Activated CD4-positive, alpha-beta memory T cell treated with anti-CD3 and anti-CD28 coated beads for 36 hours (primary cell): ENCODE measurements at regions of chr7 and their contacts with region 1.

Region 1: GRCh38 chr7:138752568-138753518 is 45.0 kb upstream of the TMEM213 start:
- DNase-seq: peak; percentile 98
- H3K4me3 Mint-ChIP-seq: peak overlapping the region; percentile 34
- H3K27ac Mint-ChIP-seq: peak overlapping the region; percentile 84
- H3K4me1 Mint-ChIP-seq: peaks cover 78% of the 10 kb centered on the region
- H3K27me3 Mint-ChIP-seq: no peaks in the 10 kb centered on the region

Region 2: DNA sequence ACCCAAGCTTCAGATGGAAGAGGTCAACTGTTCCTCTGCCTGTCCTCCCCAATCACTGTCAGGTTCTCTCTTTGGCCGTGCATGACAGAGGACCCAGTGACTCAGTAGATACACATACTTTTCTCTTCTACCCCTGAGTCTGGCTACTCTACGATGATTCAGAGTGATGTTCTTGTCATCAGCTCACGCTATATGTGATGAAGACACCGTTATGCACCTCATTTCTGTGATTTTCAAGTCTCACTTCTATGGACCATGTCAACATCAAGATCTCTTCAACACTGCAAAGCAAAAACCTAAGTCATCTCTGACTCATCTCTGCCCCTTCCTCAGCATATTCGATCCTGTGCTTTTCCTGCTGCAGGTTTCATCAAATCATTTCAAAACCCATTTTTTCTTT is 829.5 kb before region 1 on chr7:
- CTCF ChIA-PET with region 1: no interaction called
- POLR2A ChIA-PET with region 1: no interaction called
- intact Hi-C with region 1: loop called (anchors 5 kb)
- DNase-seq: peak; percentile 36
- H3K4me3 Mint-ChIP-seq: no peak overlapping the region
- H3K27ac Mint-ChIP-seq: peak overlapping the region; percentile 49
- H3K4me1 Mint-ChIP-seq: peaks cover 38% of the 10 kb centered on the region
- H3K27me3 Mint-ChIP-seq: no peaks in the 10 kb centered on the region

Region 3: GRCh38 chr7:138459413-138460175 is 293.2 kb before region 1 on chr7:
- CTCF ChIA-PET with region 1: no interaction called
- POLR2A ChIA-PET with region 1: no interaction called
- intact Hi-C with region 1: loop called (anchors 1 kb)
- DNase-seq: peak; percentile 98
- H3K4me3 Mint-ChIP-seq: peak overlapping the region; percentile 90
- H3K27ac Mint-ChIP-seq: peak overlapping the region; percentile 65
- H3K4me1 Mint-ChIP-seq: peaks cover 25% of the 10 kb centered on the region
- H3K27me3 Mint-ChIP-seq: no peaks in the 10 kb centered on the region

Region 4: DNA sequence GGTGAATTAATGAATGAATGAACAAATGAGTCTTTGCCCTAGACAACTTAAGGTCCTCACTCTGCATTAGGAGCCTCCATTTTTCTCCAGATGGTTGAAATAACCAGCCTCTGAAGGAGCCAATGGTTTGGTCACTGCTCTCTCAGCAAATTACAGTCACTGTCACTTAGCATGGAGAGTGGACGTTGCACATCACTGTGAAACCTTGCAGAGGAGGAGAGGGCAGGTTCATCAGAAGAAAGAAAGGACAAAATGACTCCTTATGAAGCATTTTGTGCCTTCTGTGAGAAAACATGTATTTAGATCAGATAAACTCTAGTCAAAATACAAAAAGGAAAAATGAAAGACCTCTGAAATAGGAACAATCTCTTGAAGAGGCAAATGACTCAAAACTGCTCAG is 51.8 kb after region 1 on chr7:
- CTCF ChIA-PET with region 1: no interaction called
- POLR2A ChIA-PET with region 1: no interaction called
- intact Hi-C with region 1: loop called (anchors 2 kb)
- DNase-seq: peak; percentile 15
- H3K4me3 Mint-ChIP-seq: no peak overlapping the region
- H3K27ac Mint-ChIP-seq: no peak overlapping the region
- H3K4me1 Mint-ChIP-seq: peaks cover 3% of the 10 kb centered on the region
- H3K27me3 Mint-ChIP-seq: peaks cover 2% of the 10 kb centered on the region

Region 5: GRCh38 chr7:138834583-138834982 is 81.7 kb after region 1 on chr7:
- CTCF ChIA-PET with region 1: no interaction called
- POLR2A ChIA-PET with region 1: no interaction called
- intact Hi-C with region 1: loop called (anchors 1 kb)
- DNase-seq: peak; percentile 69
- H3K4me3 Mint-ChIP-seq: no peak overlapping the region
- H3K27ac Mint-ChIP-seq: no peak overlapping the region
- H3K4me1 Mint-ChIP-seq: peaks cover 12% of the 10 kb centered on the region
- H3K27me3 Mint-ChIP-seq: peaks cover 34% of the 10 kb centered on the region

Region 6: GRCh38 chr7:138875794-138876193 is 123.0 kb after region 1 on chr7:
- CTCF ChIA-PET with region 1: no interaction called
- POLR2A ChIA-PET with region 1: no interaction called
- intact Hi-C with region 1: loop called (anchors 1 kb)
- DNase-seq: peak; percentile 80
- H3K4me3 Mint-ChIP-seq: peak overlapping the region; percentile 29
- H3K27ac Mint-ChIP-seq: peak overlapping the region; percentile 85
- H3K4me1 Mint-ChIP-seq: peaks cover 25% of the 10 kb centered on the region
- H3K27me3 Mint-ChIP-seq: no peaks in the 10 kb centered on the region

Region 7: GRCh38 chr7:139035586-139036353 is 282.9 kb after region 1 on chr7 and contains the start of gene ZC3HAV1L:
- CTCF ChIA-PET with region 1: no interaction called
- POLR2A ChIA-PET with region 1: no interaction called
- intact Hi-C with region 1: loop called (anchors 2 kb)
- DNase-seq: peak; percentile 72
- H3K4me3 Mint-ChIP-seq: peak within 1 kb of the TSS; percentile 81
- H3K27ac Mint-ChIP-seq: peak within 1 kb of the TSS; percentile 70
- H3K4me1 Mint-ChIP-seq: peaks cover 21% of the 10 kb centered on the region
- H3K27me3 Mint-ChIP-seq: no peaks in the 10 kb centered on the region
- total RNA-seq, gene ZC3HAV1L: 11.8 to 14.7 TPM